CD4-positive, alpha-beta memory T cell (primary cell): ENCODE measurements at regions of chr18 and their contacts with region 1.

Region 1: GRCh38 chr18:61893971-61894750 is 1.4 kb upstream of the RNF152 start:
- DNase-seq: peak; percentile 57 to 73 (median 61)
- H3K4me3 ChIP-seq: peak overlapping the region in 1 of 2 donors; percentile 53
- H3K4me3 Mint-ChIP-seq: peak overlapping the region; percentile 76 to 93 (median 80)
- H3K27ac ChIP-seq: no peak overlapping the region
- H3K27ac Mint-ChIP-seq: no peak overlapping the region
- H3K4me1 ChIP-seq: peaks cover 6% of the 10 kb centered on the region
- H3K4me1 Mint-ChIP-seq: peaks cover 3 to 19% (median 11%) of the 10 kb centered on the region in 4 donors
- H3K27me3 ChIP-seq: peaks cover 11% of the 10 kb centered on the region
- H3K27me3 Mint-ChIP-seq: peaks cover 14 to 17% of the 10 kb centered on the region in 2 donors

Region 2: DNA sequence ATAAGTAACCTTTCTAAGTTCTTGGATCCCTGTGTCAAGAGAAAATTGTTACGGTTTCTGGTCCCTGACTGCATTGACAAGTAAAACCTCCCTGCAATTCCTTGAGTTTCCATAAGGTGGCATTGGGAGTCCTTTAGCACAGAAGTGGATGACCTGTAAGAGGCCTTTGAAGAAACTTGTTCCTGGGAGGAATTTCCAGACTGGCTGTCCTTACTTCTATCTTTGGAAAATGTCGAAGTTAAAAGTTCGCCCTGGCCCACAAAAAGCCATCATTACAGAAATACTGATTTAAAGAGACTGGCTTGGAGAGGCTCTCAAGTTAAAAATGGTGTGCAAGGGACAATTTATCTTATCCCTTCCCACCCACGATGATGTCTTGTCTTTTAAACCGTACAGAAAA is 342.6 kb before region 1 on chr18:
- CTCF ChIA-PET with region 1: no interaction called
- POLR2A ChIA-PET with region 1: no interaction called
- intact Hi-C with region 1: loop called (anchors 5 kb)
- DNase-seq: peak in 4 of 5 donors; percentile 5 to 27 (median 18)
- H3K4me3 ChIP-seq: no peak overlapping the region
- H3K4me3 Mint-ChIP-seq: no peak overlapping the region
- H3K27ac ChIP-seq: no peak overlapping the region
- H3K27ac Mint-ChIP-seq: no peak overlapping the region
- H3K4me1 ChIP-seq: no peaks in the 10 kb centered on the region
- H3K4me1 Mint-ChIP-seq: peaks cover 0 to 8% (median 1%) of the 10 kb centered on the region in 4 donors
- H3K27me3 ChIP-seq: no peaks in the 10 kb centered on the region
- H3K27me3 Mint-ChIP-seq: peaks cover 0 to 2% of the 10 kb centered on the region in 2 donors

Region 3: GRCh38 chr18:61581578-61582201 is 312.5 kb before region 1 on chr18:
- CTCF ChIA-PET with region 1: interaction called, 4 read pairs
- POLR2A ChIA-PET with region 1: no interaction called
- intact Hi-C with region 1: loop called (anchors 1 kb)
- DNase-seq: peak; percentile 47 to 62 (median 50)
- H3K4me3 ChIP-seq: no peak overlapping the region
- H3K4me3 Mint-ChIP-seq: peak overlapping the region in 5 of 8 donors; percentile 13 to 63 (median 37)
- H3K27ac ChIP-seq: no peak overlapping the region
- H3K27ac Mint-ChIP-seq: peak overlapping the region in 2 of 7 donors; percentile 17 to 53
- H3K4me1 ChIP-seq: peaks cover 6% of the 10 kb centered on the region
- H3K4me1 Mint-ChIP-seq: peaks cover 5 to 24% (median 9%) of the 10 kb centered on the region in 4 donors
- H3K27me3 ChIP-seq: no peaks in the 10 kb centered on the region
- H3K27me3 Mint-ChIP-seq: peaks cover 34 to 42% of the 10 kb centered on the region in 2 donors

Region 4: DNA sequence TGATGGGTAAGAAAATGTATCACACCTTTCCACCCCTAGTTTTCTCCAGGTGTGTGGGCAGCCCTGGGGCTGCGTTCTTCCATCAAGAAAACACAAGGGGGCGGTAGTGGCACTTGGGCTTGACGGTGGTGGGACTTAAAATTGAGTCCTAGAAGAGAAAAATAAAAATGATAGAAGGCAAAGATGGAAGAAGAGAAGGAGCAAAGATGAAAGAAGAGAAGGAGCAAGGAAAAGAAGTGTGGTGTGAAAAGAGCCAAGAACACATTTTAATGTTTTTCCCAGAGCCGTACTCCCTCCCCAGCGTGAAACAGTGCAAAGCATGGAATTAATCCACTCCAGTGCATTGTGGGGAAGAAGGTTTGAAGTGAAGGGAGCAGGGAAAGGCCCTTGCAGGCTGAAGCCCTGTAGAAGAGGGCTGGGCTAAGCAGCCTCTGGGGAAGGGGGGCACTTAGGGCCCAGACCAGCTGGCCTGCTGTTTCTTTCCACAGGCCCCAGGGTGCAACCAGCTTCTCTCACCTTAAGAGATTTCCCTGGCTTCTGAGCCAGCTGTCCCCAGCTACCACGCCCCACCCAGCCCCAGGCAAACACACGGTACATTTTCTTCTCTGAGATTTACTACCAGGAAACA is 258.1 kb before region 1 on chr18:
- CTCF ChIA-PET with region 1: interaction called, 5 read pairs
- POLR2A ChIA-PET with region 1: no interaction called
- intact Hi-C with region 1: loop called (anchors 5 kb)
- DNase-seq: peak in 4 of 5 donors; percentile 26 to 41 (median 34)
- H3K4me3 ChIP-seq: no peak overlapping the region
- H3K4me3 Mint-ChIP-seq: no peak overlapping the region
- H3K27ac ChIP-seq: no peak overlapping the region
- H3K27ac Mint-ChIP-seq: no peak overlapping the region
- H3K4me1 ChIP-seq: no peaks in the 10 kb centered on the region
- H3K4me1 Mint-ChIP-seq: peaks cover 0 to 2% (median 0%) of the 10 kb centered on the region in 4 donors
- H3K27me3 ChIP-seq: peaks cover 3% of the 10 kb centered on the region
- H3K27me3 Mint-ChIP-seq: peaks cover 4 to 7% of the 10 kb centered on the region in 2 donors

Region 5: GRCh38 chr18:61833387-61833786 is 60.8 kb before region 1 on chr18:
- CTCF ChIA-PET with region 1: no interaction called
- POLR2A ChIA-PET with region 1: no interaction called
- intact Hi-C with region 1: loop called (anchors 2 kb)
- DNase-seq: peak in 4 of 5 donors; percentile 9 to 28 (median 16)
- H3K4me3 ChIP-seq: no peak overlapping the region
- H3K4me3 Mint-ChIP-seq: peak overlapping the region in 7 of 8 donors; percentile 7 to 76 (median 49)
- H3K27ac ChIP-seq: no peak overlapping the region
- H3K27ac Mint-ChIP-seq: peak overlapping the region in 1 of 7 donors; percentile 49
- H3K4me1 ChIP-seq: peaks cover 20% of the 10 kb centered on the region
- H3K4me1 Mint-ChIP-seq: peaks cover 18 to 24% (median 21%) of the 10 kb centered on the region in 4 donors
- H3K27me3 ChIP-seq: no peaks in the 10 kb centered on the region
- H3K27me3 Mint-ChIP-seq: peaks cover 1 to 6% of the 10 kb centered on the region in 2 donors

Region 6: GRCh38 chr18:61975526-61976326 is 81.6 kb after region 1 on chr18:
- CTCF ChIA-PET with region 1: no interaction called
- POLR2A ChIA-PET with region 1: no interaction called
- intact Hi-C with region 1: loop called (anchors 5 kb)
- DNase-seq: peak; percentile 69 to 80 (median 73)
- H3K4me3 ChIP-seq: no peak overlapping the region
- H3K4me3 Mint-ChIP-seq: peak overlapping the region in 6 of 8 donors; percentile 13 to 44 (median 23)
- H3K27ac ChIP-seq: peak overlapping the region; percentile 49
- H3K27ac Mint-ChIP-seq: peak overlapping the region; percentile 73 to 91 (median 85)
- H3K4me1 ChIP-seq: peaks cover 16% of the 10 kb centered on the region
- H3K4me1 Mint-ChIP-seq: peaks cover 18 to 37% (median 24%) of the 10 kb centered on the region in 4 donors
- H3K27me3 ChIP-seq: no peaks in the 10 kb centered on the region
- H3K27me3 Mint-ChIP-seq: no peaks in the 10 kb centered on the region

Region 7: DNA sequence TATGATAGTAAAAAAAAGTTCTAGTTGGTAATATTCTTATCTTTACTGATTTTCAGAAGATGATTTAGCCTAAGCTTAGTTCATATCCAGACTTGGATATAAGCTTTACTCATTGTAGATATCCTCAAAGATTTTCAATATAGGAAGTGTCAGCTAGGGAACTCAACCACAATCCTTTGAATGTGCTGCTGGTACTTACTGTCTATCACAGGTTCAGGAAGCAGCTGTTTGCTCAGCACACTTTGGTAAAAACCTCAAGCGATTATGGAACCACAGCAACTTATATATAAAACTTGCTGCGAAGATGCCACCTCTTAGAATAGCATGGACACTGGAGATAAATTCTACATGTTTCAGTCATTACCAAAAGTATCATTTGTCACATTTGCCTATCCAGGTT is 370.8 kb after region 1 on chr18:
- CTCF ChIA-PET with region 1: no interaction called
- POLR2A ChIA-PET with region 1: no interaction called
- intact Hi-C with region 1: loop called (anchors 5 kb)
- DNase-seq: no peak
- H3K4me3 ChIP-seq: no peak overlapping the region
- H3K4me3 Mint-ChIP-seq: no peak overlapping the region
- H3K27ac ChIP-seq: no peak overlapping the region
- H3K27ac Mint-ChIP-seq: peak overlapping the region in 1 of 7 donors; percentile 23
- H3K4me1 ChIP-seq: no peaks in the 10 kb centered on the region
- H3K4me1 Mint-ChIP-seq: peaks cover 0 to 5% (median 2%) of the 10 kb centered on the region in 4 donors
- H3K27me3 ChIP-seq: no peaks in the 10 kb centered on the region
- H3K27me3 Mint-ChIP-seq: no peaks in the 10 kb centered on the region